Endothelial cell of umbilical vein (primary cell): ENCODE measurements at regions of chr9 and their contacts with region 1.

Region 1: GRCh38 chr9:76704593-76705204 is 59.5 kb upstream of the PCA3 start:
- DNase-seq: peak; percentile 91
- H3K4me3 ChIP-seq: no peak overlapping the region
- H3K27ac ChIP-seq: no peak overlapping the region
- H3K4me1 ChIP-seq: peaks cover 27% of the 10 kb centered on the region
- H3K27me3 ChIP-seq: peaks cover 0 to 15% of the 10 kb centered on the region in 2 experiments
- CTCF ChIP-seq: peak; percentile 30 to 61
- POLR2A ChIP-seq: no peak

Region 2: GRCh38 chr9:75265525-75265972 is 1439.2 kb before region 1 on chr9:
- CTCF ChIA-PET with region 1: interaction called, 5 read pairs
- POLR2A ChIA-PET with region 1: no interaction called
- dilution Hi-C with region 1: no loop called
- intact Hi-C with region 1: loop called (anchors 10 kb)
- DNase-seq: peak; percentile 52
- H3K4me3 ChIP-seq: no peak overlapping the region
- H3K27ac ChIP-seq: no peak overlapping the region
- H3K4me1 ChIP-seq: no peaks in the 10 kb centered on the region
- H3K27me3 ChIP-seq: peaks cover 0 to 2% of the 10 kb centered on the region in 2 experiments
- CTCF ChIP-seq: peak; percentile 66 to 74
- POLR2A ChIP-seq: no peak

Region 3: DNA sequence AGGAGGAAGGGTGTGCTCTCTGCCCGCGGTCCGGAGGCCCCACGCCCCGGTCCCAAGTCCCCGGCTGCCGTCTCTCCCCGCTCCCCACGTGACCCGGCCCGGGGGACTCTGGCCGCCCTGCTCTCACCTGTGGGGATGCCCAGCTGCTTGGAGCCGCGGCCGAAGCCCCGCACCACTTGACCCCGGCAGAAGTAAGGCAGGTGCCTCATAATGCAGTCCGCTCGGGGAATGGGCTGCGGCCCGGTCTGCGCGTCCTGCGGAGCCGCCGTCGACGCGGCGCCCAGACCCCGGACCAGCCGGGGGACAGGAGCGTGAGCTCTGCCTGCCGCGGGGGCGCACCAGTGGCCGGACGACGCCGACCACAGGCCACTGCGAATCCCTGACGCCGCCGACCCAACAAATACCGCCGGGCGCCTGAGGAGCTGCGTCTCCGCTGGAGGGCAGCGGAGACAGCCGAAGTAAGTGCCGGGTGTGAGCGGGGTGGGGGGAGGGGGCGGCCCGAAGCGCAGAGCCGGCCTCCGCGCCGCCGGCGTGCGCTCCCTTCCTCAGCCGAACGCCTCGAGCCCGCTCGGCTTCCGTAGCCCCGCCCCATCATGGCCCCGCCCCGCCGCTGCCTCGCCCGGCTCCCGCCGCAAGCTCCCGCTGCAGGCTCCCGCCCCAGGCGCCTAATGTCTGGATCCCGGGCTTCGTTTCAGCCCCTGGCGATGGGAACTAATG is 310.6 kb before region 1 on chr9 and contains the start of gene RFK:
- CTCF ChIA-PET with region 1: interaction called, 17 read pairs
- POLR2A ChIA-PET with region 1: interaction called, 4 read pairs
- dilution Hi-C with region 1: no loop called
- intact Hi-C with region 1: loop called (anchors 2 kb)
- DNase-seq: peak; percentile 95
- H3K4me3 ChIP-seq: peak within 1 kb of the TSS; percentile 49 to 87 (median 77)
- H3K27ac ChIP-seq: peak within 1 kb of the TSS; percentile 95
- H3K4me1 ChIP-seq: peaks cover 23% of the 10 kb centered on the region
- H3K27me3 ChIP-seq: no peaks in the 10 kb centered on the region
- CTCF ChIP-seq: peak; percentile 17 to 46
- POLR2A ChIP-seq: peak; percentile 89
- total RNA-seq, gene RFK: 32.9 and 39.7 TPM in 2 replicates

Region 4: DNA sequence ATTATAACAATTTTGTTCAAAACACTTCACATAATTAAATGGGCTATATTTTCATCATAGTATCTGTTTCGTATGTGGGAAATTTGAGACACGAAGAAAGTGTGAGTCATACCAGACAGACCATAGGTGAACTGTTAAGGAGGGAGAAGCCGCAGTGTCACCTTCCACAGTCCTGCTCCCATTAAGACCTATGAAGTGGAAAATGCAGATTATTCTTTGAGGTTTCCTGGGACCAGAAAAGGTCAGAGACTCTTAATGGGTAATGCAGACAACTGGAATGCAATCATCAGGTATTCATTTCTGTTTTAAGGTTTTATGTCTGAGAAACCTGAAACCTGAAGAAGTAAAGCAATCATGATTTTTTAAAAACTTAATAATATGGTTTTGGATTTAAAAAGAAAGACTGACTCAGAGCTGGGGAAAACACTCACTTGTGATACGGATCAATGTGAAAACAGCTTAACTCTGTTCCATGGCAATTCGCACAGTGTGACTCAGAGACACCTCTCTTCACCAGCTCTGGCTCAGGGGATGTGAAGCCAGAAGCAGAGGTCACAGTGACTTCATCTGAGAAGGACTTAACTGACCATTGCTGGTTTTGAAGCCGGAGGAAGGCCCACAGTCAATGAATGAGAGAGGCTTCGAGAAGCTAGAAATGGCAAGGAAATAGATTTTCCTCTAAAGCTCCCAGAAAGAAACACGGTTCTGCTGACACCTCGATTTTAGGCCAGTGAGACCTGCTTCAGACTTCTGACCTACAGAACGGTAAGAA is 263.0 kb before region 1 on chr9:
- CTCF ChIA-PET with region 1: interaction called, 101 read pairs
- POLR2A ChIA-PET with region 1: no interaction called
- dilution Hi-C with region 1: no loop called
- intact Hi-C with region 1: no loop called
- DNase-seq: peak; percentile 77
- H3K4me3 ChIP-seq: no peak overlapping the region
- H3K27ac ChIP-seq: peak overlapping the region; percentile 53
- H3K4me1 ChIP-seq: peaks cover 8% of the 10 kb centered on the region
- H3K27me3 ChIP-seq: no peaks in the 10 kb centered on the region
- CTCF ChIP-seq: no peak
- POLR2A ChIP-seq: no peak

Region 5: GRCh38 chr9:76658535-76659231 is 46.0 kb before region 1 on chr9:
- CTCF ChIA-PET with region 1: interaction called, 140 read pairs
- POLR2A ChIA-PET with region 1: no interaction called
- dilution Hi-C with region 1: no loop called
- intact Hi-C with region 1: loop called (anchors 1 kb)
- DNase-seq: peak; percentile 79
- H3K4me3 ChIP-seq: no peak overlapping the region
- H3K27ac ChIP-seq: no peak overlapping the region
- H3K4me1 ChIP-seq: peaks cover 51% of the 10 kb centered on the region
- H3K27me3 ChIP-seq: no peaks in the 10 kb centered on the region
- CTCF ChIP-seq: peak; percentile 37 to 54
- POLR2A ChIP-seq: no peak

Region 6: DNA sequence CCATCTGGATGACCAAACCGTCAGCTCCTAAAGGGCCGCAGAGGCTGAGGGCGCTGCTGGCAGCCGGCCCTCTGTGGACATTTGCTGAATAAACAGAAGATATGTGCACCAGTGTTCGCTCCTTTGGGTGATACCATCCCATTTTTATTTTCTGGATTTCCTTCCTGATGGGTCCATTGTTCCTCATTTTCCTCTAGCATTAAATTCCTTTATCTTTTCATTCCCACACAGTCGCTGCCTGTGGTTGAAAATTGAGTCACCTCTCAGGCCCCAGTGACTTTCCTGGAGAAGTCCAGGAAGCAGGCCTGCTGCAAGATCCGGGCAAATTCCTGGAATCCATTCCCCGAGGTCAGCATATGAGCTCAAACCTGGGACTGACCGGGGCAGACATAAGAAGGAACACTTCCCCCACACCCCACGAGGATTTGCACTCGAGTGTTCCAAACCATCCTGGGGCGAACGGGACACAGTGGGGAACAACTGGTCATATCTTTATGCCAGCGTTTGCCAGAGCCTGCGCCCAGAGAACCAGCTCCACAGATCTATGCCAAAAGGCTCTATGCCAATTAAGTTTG is 27.1 kb before region 1 on chr9:
- CTCF ChIA-PET with region 1: interaction called, 16 read pairs
- POLR2A ChIA-PET with region 1: interaction called, 3 read pairs
- dilution Hi-C with region 1: no loop called
- intact Hi-C with region 1: loop called (anchors 1 kb)
- DNase-seq: peak; percentile 95
- H3K4me3 ChIP-seq: peak overlapping the region in 1 of 3 experiments; percentile 46
- H3K27ac ChIP-seq: peak overlapping the region; percentile 96
- H3K4me1 ChIP-seq: peaks cover 22% of the 10 kb centered on the region
- H3K27me3 ChIP-seq: no peaks in the 10 kb centered on the region
- CTCF ChIP-seq: no peak
- POLR2A ChIP-seq: no peak

Region 7: GRCh38 chr9:76717613-76718012 is 12.9 kb after region 1 on chr9:
- CTCF ChIA-PET with region 1: interaction called, 18 read pairs
- POLR2A ChIA-PET with region 1: no interaction called
- dilution Hi-C with region 1: no loop called
- intact Hi-C with region 1: no loop called
- DNase-seq: peak; percentile 77
- H3K4me3 ChIP-seq: no peak overlapping the region
- H3K27ac ChIP-seq: peak overlapping the region; percentile 5
- H3K4me1 ChIP-seq: peaks cover 30% of the 10 kb centered on the region
- H3K27me3 ChIP-seq: peaks cover 1% of the 10 kb centered on the region in 2 experiments
- CTCF ChIP-seq: no peak
- POLR2A ChIP-seq: no peak